ENCODE measurements at regions of chr2 and their contacts with region 1.

Region 1: DNA sequence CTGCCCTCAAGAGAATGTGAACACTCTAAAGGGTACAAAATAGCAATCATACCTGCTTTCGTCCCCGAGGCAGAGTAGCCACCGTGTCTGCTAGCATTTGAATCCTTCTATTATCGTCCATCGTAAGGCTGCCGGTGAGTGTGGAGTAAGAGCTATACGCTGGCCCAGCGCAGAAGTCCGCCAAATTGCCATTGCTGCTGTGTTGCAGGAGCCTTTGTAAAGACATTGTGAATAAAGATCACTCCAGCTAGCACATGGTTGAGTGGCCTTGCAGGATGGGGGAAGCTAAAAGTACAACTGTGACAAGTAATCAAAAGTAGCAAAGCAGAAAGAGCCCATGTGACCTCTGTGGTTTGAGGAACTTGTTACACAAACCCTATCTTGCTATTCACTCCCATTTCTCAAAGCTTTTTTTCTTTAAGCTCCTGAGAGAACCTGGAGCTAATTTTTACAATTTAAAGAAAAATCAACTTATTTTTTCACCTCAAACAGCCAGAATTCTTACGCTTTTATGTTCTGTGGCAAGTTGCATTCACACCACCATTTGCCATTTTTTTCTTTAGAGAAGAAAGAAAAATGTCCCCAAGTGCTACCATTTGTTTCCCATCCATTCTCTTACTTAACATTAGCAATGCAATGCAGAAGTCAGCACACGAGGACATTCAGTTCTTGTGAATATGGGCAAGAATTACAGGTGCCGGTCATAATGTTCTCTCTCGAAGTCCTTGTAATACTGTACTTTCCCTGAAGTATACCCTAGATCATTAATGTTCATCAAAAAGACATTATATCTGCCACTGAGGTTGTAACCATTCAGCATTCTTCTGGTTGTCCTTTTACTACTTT is at the start of gene CYTIP:
- DNase-seq: peak; percentile 82
- ATAC-seq: peak; percentile 43
- H3K4me3 Mint-ChIP-seq: peak within 1 kb of the TSS; percentile 90
- H3K27ac Mint-ChIP-seq: peak within 1 kb of the TSS; percentile 94
- H3K4me1 Mint-ChIP-seq: peaks cover 35% of the 10 kb centered on the region
- H3K27me3 Mint-ChIP-seq: no peaks in the 10 kb centered on the region
- CTCF ChIP-seq: no peak
- total RNA-seq, gene CYTIP: 514 to 520 TPM

Region 2: DNA sequence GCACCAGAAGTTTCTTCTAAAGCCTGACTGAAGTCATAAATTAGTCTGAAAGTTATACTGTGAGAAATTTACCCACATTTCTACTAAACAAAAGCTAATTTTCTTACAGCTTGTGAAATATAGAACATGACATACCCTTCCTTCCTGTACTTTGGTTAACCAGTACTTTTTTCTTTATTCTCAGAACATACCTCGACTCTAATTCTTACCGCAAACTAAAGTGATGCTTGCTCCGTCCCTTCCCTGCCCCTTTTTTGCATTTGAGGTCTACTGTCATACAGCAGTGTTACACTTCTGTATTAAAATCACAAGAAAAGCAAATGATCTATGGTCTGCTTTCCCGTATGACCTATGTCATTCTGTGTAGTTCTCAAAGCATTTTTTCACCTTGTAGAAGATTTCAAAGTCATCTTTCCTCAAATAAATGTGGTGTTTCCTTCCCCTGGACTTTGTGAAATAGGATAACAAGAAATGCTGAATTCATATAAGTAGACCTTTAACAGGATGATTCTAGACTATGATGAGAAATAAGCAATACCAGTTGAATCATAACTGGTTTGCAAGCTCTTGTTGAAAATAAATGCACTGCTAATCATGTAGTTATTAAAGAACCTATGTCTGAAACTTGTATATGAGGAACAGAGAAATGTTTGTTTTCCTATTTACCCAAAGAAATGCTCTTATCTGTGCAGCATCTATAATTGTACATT is 30.5 kb before region 1 on chr2:
- CTCF ChIA-PET with region 1: interaction called, 14 read pairs
- POLR2A ChIA-PET with region 1: interaction called, 1,592 read pairs
- intact Hi-C with region 1: loop called (anchors 2 kb)
- DNase-seq: peak; percentile 71
- ATAC-seq: peak; percentile 65
- H3K4me3 Mint-ChIP-seq: peak overlapping the region; percentile 58
- H3K27ac Mint-ChIP-seq: peak overlapping the region; percentile 97
- H3K4me1 Mint-ChIP-seq: peaks cover 85% of the 10 kb centered on the region
- H3K27me3 Mint-ChIP-seq: no peaks in the 10 kb centered on the region
- CTCF ChIP-seq: no peak

Region 3: DNA sequence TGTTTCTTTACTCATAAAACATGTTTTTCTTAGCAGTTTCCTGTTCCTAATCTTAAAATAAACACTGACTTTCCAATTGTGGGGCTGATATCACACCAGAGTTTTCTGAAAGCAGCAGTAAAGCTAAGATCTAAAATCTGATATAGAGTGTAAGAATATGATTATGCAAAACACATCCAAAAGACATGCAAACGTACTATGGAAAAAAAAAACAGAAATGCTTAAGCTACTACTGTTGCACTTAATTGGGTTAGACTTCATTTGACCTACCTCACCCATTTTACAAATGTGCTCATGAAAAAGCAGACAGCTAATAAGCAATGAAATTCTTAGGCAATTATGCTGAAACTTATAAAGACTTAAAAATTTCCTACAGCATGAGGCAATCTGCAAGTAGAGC is 10.6 kb before region 1 on chr2:
- CTCF ChIA-PET with region 1: interaction called, 16 read pairs
- POLR2A ChIA-PET with region 1: interaction called, 1,592 read pairs
- intact Hi-C with region 1: no loop called
- DNase-seq: no peak
- ATAC-seq: no peak
- H3K4me3 Mint-ChIP-seq: peak overlapping the region; percentile 90
- H3K27ac Mint-ChIP-seq: peak overlapping the region; percentile 94
- H3K4me1 Mint-ChIP-seq: peaks cover 51% of the 10 kb centered on the region
- H3K27me3 Mint-ChIP-seq: no peaks in the 10 kb centered on the region
- CTCF ChIP-seq: no peak

Region 4: DNA sequence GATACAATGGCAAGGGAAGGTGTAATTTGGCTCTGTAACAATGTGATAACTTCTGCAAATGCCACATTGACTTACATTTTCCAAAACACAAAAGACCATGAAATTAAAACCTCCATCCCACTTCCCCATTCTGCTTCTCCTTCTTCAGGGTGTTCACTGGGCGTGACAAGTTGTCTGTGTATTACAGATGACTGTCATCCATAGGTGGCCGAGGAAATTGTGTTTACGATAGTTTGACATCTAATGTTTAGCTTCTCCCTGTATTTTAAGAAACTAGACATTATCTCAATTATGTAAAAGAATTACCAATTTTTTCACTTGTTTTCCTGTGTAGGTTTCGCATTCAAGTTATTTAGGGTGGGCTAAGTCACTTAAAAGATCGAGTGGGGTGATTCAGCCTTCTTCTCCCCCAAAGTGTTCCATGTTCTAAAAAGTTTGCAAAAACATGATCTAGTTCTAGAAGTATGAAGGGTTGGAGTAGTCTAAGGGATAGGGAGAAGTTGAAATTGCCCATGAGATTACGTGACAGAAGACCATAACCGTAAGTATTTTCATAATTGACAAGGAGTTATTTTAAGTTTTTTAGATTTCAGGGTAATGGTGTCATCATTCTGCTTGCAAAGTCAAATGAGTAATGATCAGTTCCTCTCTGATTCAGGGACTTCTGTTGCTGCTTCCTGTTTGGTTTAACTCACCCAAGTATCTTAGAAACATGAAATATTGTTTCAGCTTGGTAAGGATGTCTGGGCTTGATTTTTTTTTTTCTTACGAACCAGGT is 25.1 kb after region 1 on chr2:
- CTCF ChIA-PET with region 1: interaction called, 14 read pairs
- POLR2A ChIA-PET with region 1: interaction called, 1,592 read pairs
- intact Hi-C with region 1: loop called (anchors 2 kb)
- DNase-seq: no peak
- ATAC-seq: peak; percentile 73
- H3K4me3 Mint-ChIP-seq: peak overlapping the region; percentile 77
- H3K27ac Mint-ChIP-seq: peak overlapping the region; percentile 99
- H3K4me1 Mint-ChIP-seq: peaks cover 93% of the 10 kb centered on the region
- H3K27me3 Mint-ChIP-seq: no peaks in the 10 kb centered on the region
- CTCF ChIP-seq: no peak

Measured in activated CD8-positive, alpha-beta T cell treated with anti-CD3 and anti-CD28 coated beads for 36 hours (primary cell).